RWPE1 (cell line): ENCODE measurements at regions of chr1 and their contacts with region 1.

Region 1: GRCh38 chr1:29251164-29252130 is 15.1 kb downstream of the PTPRU start:
- DNase-seq: no peak
- H3K27ac ChIP-seq: no peak overlapping the region
- CTCF ChIP-seq: no peak

Region 2: GRCh38 chr1:29230553-29231378 is 20.7 kb before region 1 on chr1 and contains the start of gene MECR:
- CTCF ChIA-PET with region 1: no interaction called
- POLR2A ChIA-PET with region 1: no interaction called
- DNase-seq: peak; percentile 96
- H3K27ac ChIP-seq: peak within 1 kb of the TSS; percentile 51
- CTCF ChIP-seq: 0 out of 2 replicates have a peak, but pooled peaks have one; percentile 10

Region 3: GRCh38 chr1:29264773-29265389 is 13.4 kb after region 1 on chr1:
- CTCF ChIA-PET with region 1: no interaction called
- POLR2A ChIA-PET with region 1: no interaction called
- DNase-seq: no peak
- H3K27ac ChIP-seq: no peak overlapping the region
- CTCF ChIP-seq: no peak

Region 4: GRCh38 chr1:29284973-29285550 is 33.6 kb after region 1 on chr1:
- CTCF ChIA-PET with region 1: interaction called, 10 read pairs
- POLR2A ChIA-PET with region 1: no interaction called
- DNase-seq: no peak
- H3K27ac ChIP-seq: no peak overlapping the region; the same call in 1 of the 2 replicates
- CTCF ChIP-seq: no peak